A673 (cell line): ENCODE measurements at regions of chr4 and their contacts with region 1.

Region 1: DNA sequence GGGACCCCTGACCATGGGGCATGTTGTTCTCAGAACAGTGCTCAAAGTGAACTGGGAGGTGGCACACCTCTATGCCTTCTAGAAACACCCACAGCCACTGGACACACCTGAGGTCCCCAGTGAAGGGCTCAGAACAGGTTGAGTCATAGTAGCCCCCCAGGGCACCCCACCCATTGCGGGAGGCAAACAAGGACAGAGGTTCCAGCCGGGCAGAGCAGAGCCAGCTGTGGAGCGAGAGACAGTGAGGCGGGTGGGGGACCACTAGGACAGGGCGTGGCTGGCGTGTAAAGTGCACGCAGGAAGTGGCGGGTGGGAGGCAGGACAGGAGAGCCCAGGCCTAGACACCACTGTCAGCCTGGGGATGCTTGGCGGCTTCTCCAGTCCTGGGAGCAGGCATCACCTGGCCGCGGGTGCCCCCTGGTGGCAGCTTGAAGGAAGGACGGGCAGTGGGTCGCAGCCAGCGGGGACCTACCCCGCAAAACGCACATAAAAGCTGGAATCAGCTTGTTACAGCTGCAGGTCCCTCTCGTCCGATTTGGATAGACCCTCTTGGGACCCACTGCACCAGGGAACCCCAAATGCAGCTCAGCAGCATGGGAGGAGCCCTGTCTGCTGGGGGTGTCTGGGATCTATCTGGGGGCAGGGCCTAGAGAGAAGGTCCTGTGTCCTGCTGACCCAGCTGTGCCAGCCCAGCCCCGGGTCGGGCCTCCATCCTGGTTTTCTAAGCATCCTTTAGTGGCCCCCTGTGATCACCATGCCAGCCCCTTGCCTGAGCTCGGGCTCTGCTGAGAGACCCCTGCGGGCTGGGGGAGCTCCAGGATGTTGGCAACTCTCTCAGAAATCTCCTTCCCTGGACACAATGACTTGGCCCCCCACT is 57.6 kb downstream of the WFS1 start:
- DNase-seq: peak; percentile 77
- H3K4me3 ChIP-seq: no peak overlapping the region
- H3K27ac ChIP-seq: no peak overlapping the region
- H3K4me1 ChIP-seq: peaks cover 13% of the 10 kb centered on the region
- H3K27me3 ChIP-seq: peaks cover 23% of the 10 kb centered on the region
- CTCF ChIP-seq: peak; percentile 88

Region 2: GRCh38 chr4:5998333-5998936 is 328.8 kb before region 1 on chr4:
- CTCF ChIA-PET with region 1: interaction called, 9 read pairs
- POLR2A ChIA-PET with region 1: no interaction called
- intact Hi-C with region 1: loop called (anchors 1 kb)
- DNase-seq: peak; percentile 77
- H3K4me3 ChIP-seq: no peak overlapping the region
- H3K27ac ChIP-seq: no peak overlapping the region
- H3K4me1 ChIP-seq: no peaks in the 10 kb centered on the region
- H3K27me3 ChIP-seq: peaks cover 34% of the 10 kb centered on the region
- CTCF ChIP-seq: peak; percentile 95

Region 3: GRCh38 chr4:6250235-6250983 is 76.9 kb before region 1 on chr4:
- CTCF ChIA-PET with region 1: interaction called, 36 read pairs
- POLR2A ChIA-PET with region 1: no interaction called
- intact Hi-C with region 1: loop called (anchors 1 kb)
- DNase-seq: peak; percentile 74
- H3K4me3 ChIP-seq: no peak overlapping the region
- H3K27ac ChIP-seq: no peak overlapping the region
- H3K4me1 ChIP-seq: no peaks in the 10 kb centered on the region
- H3K27me3 ChIP-seq: peaks cover 53% of the 10 kb centered on the region
- CTCF ChIP-seq: peak; percentile 80

Region 4: GRCh38 chr4:6269616-6270511 is 57.4 kb before region 1 on chr4 and contains the start of gene WFS1:
- CTCF ChIA-PET with region 1: no interaction called
- POLR2A ChIA-PET with region 1: no interaction called
- intact Hi-C with region 1: loop called (anchors 5 kb)
- DNase-seq: peak; percentile 99
- H3K4me3 ChIP-seq: peak within 1 kb of the TSS; percentile 94
- H3K27ac ChIP-seq: peak within 1 kb of the TSS; percentile 67
- H3K4me1 ChIP-seq: peaks cover 14% of the 10 kb centered on the region
- H3K27me3 ChIP-seq: no peaks in the 10 kb centered on the region
- CTCF ChIP-seq: no peak
- total RNA-seq, gene WFS1: 14.0 and 15.6 TPM in 2 replicates

Region 5: GRCh38 chr4:6343950-6344408 is 16.7 kb after region 1 on chr4:
- CTCF ChIA-PET with region 1: no interaction called
- POLR2A ChIA-PET with region 1: no interaction called
- intact Hi-C with region 1: no loop called
- DNase-seq: no peak
- H3K4me3 ChIP-seq: no peak overlapping the region
- H3K27ac ChIP-seq: no peak overlapping the region
- H3K4me1 ChIP-seq: no peaks in the 10 kb centered on the region
- H3K27me3 ChIP-seq: peaks cover 22% of the 10 kb centered on the region
- CTCF ChIP-seq: no peak

Region 6: DNA sequence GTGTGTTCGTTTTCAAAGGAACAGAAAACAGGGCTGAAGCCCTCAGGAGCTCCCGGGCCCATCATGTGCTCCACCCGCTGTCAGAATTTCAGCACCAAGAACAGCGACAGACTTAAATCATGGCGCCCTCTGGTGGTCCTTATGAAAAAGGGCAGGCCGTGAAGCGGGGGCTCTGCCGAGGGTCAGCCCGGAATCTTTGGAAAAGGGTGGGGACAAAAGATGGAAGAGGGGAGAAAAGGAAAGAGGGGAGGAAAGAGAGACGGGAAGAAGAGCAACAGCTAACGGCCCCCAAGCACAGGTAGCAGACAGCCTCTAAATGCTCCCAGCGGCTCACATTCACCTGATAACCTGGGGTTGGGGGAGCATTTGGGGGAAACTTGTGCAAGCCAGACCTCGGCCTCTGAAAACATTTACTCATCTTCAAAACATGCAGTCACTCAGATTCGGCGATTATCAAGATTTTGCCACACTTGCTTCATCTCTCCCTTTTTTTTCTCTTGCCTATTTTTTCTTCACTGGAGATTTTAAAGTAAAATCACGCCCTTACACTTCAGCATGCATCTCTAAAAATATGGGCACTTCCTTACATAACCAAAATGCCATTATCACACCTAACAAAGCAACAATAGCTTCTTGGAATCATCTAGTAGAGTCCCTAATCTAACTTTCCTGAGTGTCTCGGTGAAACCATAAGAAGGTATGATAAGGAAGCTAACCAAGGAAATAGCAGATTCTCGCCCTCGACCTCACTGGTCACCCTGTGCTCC is 219.6 kb after region 1 on chr4:
- CTCF ChIA-PET with region 1: interaction called, 5 read pairs
- POLR2A ChIA-PET with region 1: no interaction called
- intact Hi-C with region 1: loop called (anchors 5 kb)
- DNase-seq: peak; percentile 76
- H3K4me3 ChIP-seq: no peak overlapping the region
- H3K27ac ChIP-seq: no peak overlapping the region
- H3K4me1 ChIP-seq: no peaks in the 10 kb centered on the region
- H3K27me3 ChIP-seq: peaks cover 57% of the 10 kb centered on the region
- CTCF ChIP-seq: peak; percentile 97